ENCODE measurements at regions of chr1 and their contacts with region 1.

Region 1: GRCh38 chr1:63821091-63822005 is 47.5 kb downstream of the ROR1 start:
- DNase-seq: peak in 1 of 2 experiments; percentile 62
- H3K4me3 ChIP-seq: no peak overlapping the region
- H3K27ac ChIP-seq: no peak overlapping the region
- H3K4me1 ChIP-seq: peaks cover 28% of the 10 kb centered on the region
- H3K27me3 ChIP-seq: no peaks in the 10 kb centered on the region
- CTCF ChIP-seq: no peak

Region 2: DNA sequence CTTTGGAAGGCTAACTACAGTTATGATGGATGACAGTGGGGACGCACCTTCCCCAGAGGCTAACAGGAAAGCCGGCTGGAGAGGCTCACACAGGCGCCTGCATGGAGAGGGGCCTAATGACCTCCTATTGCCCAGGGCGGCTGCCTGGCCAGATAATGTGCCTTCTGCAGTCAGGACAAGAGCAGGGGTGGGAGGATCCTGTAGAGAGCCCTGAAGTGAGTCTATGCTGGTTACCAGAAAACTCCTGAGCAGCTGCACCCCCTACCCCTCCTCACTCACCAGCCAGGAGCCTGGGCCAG is 1513.2 kb before region 1 on chr1:
- CTCF ChIA-PET with region 1: no interaction called
- POLR2A ChIA-PET with region 1: interaction called, 12 read pairs
- intact Hi-C with region 1: no loop called
- DNase-seq: peak; percentile 89 to 95
- H3K4me3 ChIP-seq: no peak overlapping the region
- H3K27ac ChIP-seq: peak overlapping the region; percentile 73
- H3K4me1 ChIP-seq: peaks cover 62% of the 10 kb centered on the region
- H3K27me3 ChIP-seq: no peaks in the 10 kb centered on the region
- CTCF ChIP-seq: no peak

Region 3: DNA sequence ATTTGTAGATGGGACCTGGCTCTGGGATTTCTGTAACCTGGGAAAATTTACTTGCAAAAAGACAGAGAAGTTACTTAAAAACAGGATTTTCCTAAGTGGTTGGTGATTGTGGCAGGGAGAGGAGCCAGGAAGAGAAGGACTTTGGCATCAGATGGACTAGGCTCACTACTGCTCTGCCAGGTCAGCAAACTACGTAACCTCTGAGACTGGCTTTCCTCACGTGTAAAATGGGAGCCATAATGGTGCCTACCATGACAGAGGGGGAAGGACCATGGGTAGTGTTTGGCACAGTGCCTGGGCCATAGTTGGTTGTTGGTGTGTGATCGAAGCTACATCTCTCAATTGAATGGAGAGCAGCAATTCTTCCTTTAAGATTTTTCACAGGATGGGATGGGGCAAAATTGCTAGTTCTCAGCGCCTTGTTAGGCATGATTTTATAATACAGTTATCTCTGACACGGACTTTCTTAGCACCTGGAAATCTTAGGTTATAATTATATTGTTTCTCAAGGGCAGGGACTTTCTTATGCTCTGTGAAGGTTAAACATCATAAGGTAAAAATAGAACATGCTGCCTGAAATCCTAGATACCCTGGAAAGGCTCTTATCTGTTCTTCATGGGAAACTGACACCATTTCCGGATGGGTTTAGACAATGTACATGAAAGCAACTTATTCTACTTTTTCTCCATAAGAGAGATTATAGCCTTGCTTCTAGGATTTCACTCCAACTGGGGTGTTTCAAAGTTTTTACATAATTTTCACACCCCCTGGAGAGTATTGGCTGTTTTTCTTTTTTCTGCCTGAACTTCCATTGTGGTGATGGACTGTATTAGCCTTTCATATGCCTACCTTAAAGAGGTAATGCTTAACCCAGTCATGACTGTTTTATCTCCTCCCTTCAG is 36.6 kb before region 1 on chr1:
- CTCF ChIA-PET with region 1: no interaction called
- POLR2A ChIA-PET with region 1: no interaction called
- intact Hi-C with region 1: loop called (anchors 2 kb)
- DNase-seq: no peak
- H3K4me3 ChIP-seq: no peak overlapping the region
- H3K27ac ChIP-seq: no peak overlapping the region
- H3K4me1 ChIP-seq: peaks cover 7% of the 10 kb centered on the region
- H3K27me3 ChIP-seq: no peaks in the 10 kb centered on the region
- CTCF ChIP-seq: no peak

Region 4: DNA sequence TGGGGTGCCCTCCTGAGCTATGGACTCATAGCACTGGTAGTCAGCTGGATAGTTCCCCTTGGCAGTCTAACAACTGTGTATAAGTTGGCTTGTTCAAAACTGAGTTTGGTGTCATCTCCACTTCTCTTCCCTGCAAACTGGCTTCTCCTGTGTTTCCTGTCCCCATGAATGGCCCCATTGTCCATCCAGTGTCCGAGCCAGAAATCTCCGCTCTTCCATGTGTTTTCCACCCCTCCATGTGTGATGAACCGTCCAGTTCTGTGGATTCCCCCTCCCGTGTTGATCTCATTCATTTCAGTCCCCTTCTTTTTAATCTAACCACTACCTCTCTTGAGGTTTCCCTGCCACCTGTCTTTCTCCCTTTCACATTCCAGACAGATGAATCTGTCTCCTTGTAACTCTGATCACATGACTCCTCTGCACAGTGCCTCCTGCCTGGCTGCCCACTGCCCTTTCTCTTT is 148.1 kb after region 1 on chr1:
- CTCF ChIA-PET with region 1: no interaction called
- POLR2A ChIA-PET with region 1: no interaction called
- intact Hi-C with region 1: no loop called
- DNase-seq: peak; percentile 43 to 70
- H3K4me3 ChIP-seq: no peak overlapping the region
- H3K27ac ChIP-seq: peak overlapping the region; percentile 59
- H3K4me1 ChIP-seq: peaks cover 27% of the 10 kb centered on the region
- H3K27me3 ChIP-seq: no peaks in the 10 kb centered on the region
- CTCF ChIP-seq: no peak